ENCODE measurements at regions of chr3 and their contacts with region 1.

Region 1: GRCh38 chr3:4584456-4585249 is 91.5 kb downstream of the ITPR1 start:
- DNase-seq: no peak
- H3K4me3 Mint-ChIP-seq: peak overlapping the region; percentile 60
- H3K27ac Mint-ChIP-seq: peak overlapping the region; percentile 89
- H3K4me1 Mint-ChIP-seq: peaks cover 38% of the 10 kb centered on the region
- H3K27me3 Mint-ChIP-seq: no peaks in the 10 kb centered on the region
- CTCF ChIP-seq: no peak

Region 2: DNA sequence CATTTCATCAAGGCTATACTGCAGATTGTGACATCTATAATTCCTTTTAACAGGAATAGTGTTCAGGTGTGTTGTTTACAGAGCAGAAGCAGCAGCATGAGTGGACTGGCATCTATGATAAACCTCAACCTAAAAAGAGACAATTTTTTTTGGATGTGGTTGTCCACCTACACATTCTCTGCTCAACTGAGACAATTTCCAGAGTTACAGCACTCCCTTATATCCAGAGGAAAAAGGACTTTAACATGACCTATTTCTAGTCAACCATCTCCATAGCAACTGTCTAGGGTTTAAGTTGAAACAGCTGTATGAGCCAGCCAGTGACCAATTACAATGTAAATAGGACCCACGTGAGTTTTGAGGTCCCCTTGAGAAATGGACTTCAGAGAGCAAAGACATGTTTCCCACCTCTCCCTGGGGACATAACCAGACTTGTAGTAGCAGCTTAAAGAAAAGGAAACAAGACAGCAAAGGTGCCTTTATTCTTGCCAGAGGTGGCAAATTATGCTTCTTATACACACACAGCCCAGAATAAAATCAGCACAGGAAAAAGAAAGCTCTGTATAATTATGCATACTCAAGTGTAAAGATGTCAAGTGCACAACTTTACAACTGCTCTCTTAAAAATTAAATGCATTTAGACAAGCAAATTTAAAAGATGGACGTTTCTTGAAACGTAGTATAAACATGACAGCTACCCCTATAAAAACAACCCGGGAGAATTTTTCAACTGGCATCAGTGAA is 157.9 kb before region 1 on chr3:
- CTCF ChIA-PET with region 1: interaction called, 3 read pairs
- POLR2A ChIA-PET with region 1: no interaction called
- intact Hi-C with region 1: loop called (anchors 5 kb)
- DNase-seq: peak; percentile 82
- H3K4me3 Mint-ChIP-seq: no peak overlapping the region
- H3K27ac Mint-ChIP-seq: peak overlapping the region; percentile 82
- H3K4me1 Mint-ChIP-seq: peaks cover 22% of the 10 kb centered on the region
- H3K27me3 Mint-ChIP-seq: no peaks in the 10 kb centered on the region
- CTCF ChIP-seq: no peak